IMR-90 (cell line): ENCODE measurements at regions of chr1 and their contacts with region 1.

Region 1: DNA sequence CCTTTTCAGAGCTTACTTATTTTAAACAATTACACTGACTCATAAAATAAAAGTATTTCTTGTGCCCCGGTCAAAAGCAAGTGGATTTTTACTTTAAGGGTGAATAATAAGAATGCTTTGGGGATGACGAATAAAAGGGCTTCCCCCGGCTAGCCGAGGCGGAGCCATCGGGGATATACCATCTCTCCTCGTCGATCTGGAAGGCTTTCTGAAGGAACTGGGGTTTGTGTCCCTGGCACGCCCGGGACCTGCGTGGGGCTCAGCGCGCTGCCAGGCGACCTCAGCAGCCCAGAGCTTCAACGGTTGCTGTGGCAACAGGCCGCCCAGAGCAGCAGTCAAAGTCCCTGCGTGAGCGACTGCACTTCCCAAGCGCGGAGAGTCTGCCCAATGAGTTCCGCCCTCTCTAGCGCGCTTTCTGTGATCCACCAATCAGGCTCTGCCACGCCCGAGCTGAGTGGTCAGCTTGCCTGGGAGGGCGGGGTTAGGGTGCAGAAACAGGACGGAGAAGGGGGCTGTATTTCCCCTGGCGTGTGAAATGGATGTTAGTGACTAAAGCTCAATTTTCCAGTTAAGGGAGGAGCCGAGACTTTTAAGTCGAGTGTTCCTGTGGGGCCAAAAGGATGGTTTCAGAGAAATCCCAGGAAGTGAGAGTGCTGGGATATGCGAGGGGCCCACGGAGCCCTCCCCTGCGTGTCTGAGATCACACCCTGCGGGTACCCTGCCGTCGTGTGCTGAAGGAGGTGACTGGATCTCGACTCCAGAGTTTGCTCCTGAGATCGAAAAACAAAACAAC is 33.0 kb upstream of the MGST3 start:
- DNase-seq: peak; percentile 98
- ATAC-seq: peak; percentile 99
- H3K4me3 ChIP-seq: peak overlapping the region; percentile 60
- H3K27ac ChIP-seq: peak overlapping the region; percentile 35
- H3K4me1 ChIP-seq: peaks cover 2% of the 10 kb centered on the region; the same call in 1 of the 2 replicates
- H3K27me3 ChIP-seq: peaks cover 4% of the 10 kb centered on the region
- CTCF ChIP-seq: no peak
- POLR2A ChIP-seq: peak; percentile 35; the same call in 1 of the 2 replicates
- RAD21 ChIP-seq: no peak

Region 2: GRCh38 chr1:165114022-165114888 is 483.8 kb before region 1 on chr1:
- CTCF ChIA-PET with region 1: no interaction called
- POLR2A ChIA-PET with region 1: no interaction called
- dilution Hi-C with region 1: no loop called
- in situ Hi-C with region 1: no loop called
- intact Hi-C with region 1: loop called (anchors 10 kb)
- DNase-seq: peak; percentile 30
- ATAC-seq: peak; percentile 72
- H3K4me3 ChIP-seq: no peak overlapping the region
- H3K27ac ChIP-seq: no peak overlapping the region
- H3K4me1 ChIP-seq: no peaks in the 10 kb centered on the region
- H3K27me3 ChIP-seq: no peaks in the 10 kb centered on the region; the same call in 1 of the 2 replicates
- CTCF ChIP-seq: peak; percentile 68
- POLR2A ChIP-seq: no peak
- RAD21 ChIP-seq: peak; percentile 61

Region 3: DNA sequence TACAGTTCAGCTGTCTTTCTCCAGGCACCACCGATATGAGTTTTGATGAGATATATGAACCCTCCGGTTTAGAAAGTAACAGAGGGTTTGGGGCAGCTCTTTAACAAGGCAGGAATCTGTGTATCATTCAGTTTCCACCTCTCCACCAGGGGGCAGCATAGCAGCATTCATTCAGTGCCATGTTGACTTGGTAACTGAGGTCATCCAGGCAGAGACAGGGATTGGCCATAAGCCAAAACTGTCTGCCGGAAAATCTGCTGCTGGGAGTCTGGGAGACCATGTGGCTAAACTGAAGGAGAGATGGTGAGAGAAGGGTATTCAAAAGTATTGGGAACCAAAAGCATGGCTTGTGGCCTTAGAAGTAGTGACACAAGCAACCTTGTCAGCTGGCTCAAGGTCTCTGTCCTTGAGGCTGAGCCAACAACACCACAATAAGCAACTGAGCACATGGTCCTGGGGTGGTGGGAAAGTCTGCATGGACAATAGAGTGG is 340.1 kb before region 1 on chr1:
- CTCF ChIA-PET with region 1: no interaction called
- POLR2A ChIA-PET with region 1: no interaction called
- dilution Hi-C with region 1: no loop called
- in situ Hi-C with region 1: no loop called
- intact Hi-C with region 1: loop called (anchors 5 kb)
- DNase-seq: peak; percentile 17
- ATAC-seq: no peak; the same call in 1 of the 2 replicates
- H3K4me3 ChIP-seq: no peak overlapping the region
- H3K27ac ChIP-seq: no peak overlapping the region
- H3K4me1 ChIP-seq: no peaks in the 10 kb centered on the region
- H3K27me3 ChIP-seq: no peaks in the 10 kb centered on the region
- CTCF ChIP-seq: peak; percentile 38
- POLR2A ChIP-seq: no peak
- RAD21 ChIP-seq: 0 out of 2 replicates have a peak, but pooled peaks have one; percentile 20

Region 4: GRCh38 chr1:165403835-165404482 is 194.1 kb before region 1 on chr1:
- CTCF ChIA-PET with region 1: interaction called, 7 read pairs
- POLR2A ChIA-PET with region 1: no interaction called
- dilution Hi-C with region 1: loop called (anchors 25 kb)
- in situ Hi-C with region 1: no loop called
- intact Hi-C with region 1: loop called (anchors 1 kb)
- DNase-seq: no peak
- ATAC-seq: no peak
- H3K4me3 ChIP-seq: no peak overlapping the region
- H3K27ac ChIP-seq: no peak overlapping the region
- H3K4me1 ChIP-seq: no peaks in the 10 kb centered on the region
- H3K27me3 ChIP-seq: no peaks in the 10 kb centered on the region
- CTCF ChIP-seq: peak; percentile 26; the same call in 1 of the 2 replicates
- POLR2A ChIP-seq: no peak
- RAD21 ChIP-seq: no peak; the same call in 1 of the 2 replicates

Region 5: GRCh38 chr1:165431079-165431478 is 167.0 kb before region 1 on chr1:
- CTCF ChIA-PET with region 1: no interaction called
- POLR2A ChIA-PET with region 1: no interaction called
- dilution Hi-C with region 1: no loop called
- in situ Hi-C with region 1: no loop called
- intact Hi-C with region 1: no loop called
- DNase-seq: no peak
- ATAC-seq: no peak
- H3K4me3 ChIP-seq: no peak overlapping the region
- H3K27ac ChIP-seq: no peak overlapping the region
- H3K4me1 ChIP-seq: no peaks in the 10 kb centered on the region
- H3K27me3 ChIP-seq: no peaks in the 10 kb centered on the region
- CTCF ChIP-seq: no peak
- POLR2A ChIP-seq: no peak
- RAD21 ChIP-seq: no peak

Region 6: DNA sequence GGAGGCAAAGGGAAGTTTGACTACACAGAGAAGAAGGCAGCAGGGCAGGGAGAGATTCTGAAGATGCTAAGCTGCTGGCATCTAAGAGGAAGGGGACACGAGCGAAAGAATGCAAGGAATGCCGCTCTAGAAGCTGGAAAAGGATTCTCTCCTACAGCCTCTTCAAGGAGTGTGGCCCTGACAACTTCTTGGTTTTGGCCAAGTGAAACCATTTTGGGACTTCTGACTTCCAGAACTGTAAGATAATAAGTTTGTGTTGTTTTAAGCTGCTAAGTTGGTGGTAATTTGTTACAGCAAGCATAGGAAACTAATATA is 61.5 kb after region 1 on chr1:
- CTCF ChIA-PET with region 1: no interaction called
- POLR2A ChIA-PET with region 1: no interaction called
- dilution Hi-C with region 1: no loop called
- in situ Hi-C with region 1: no loop called
- intact Hi-C with region 1: no loop called
- DNase-seq: no peak
- ATAC-seq: peak; percentile 38
- H3K4me3 ChIP-seq: no peak overlapping the region
- H3K27ac ChIP-seq: no peak overlapping the region
- H3K4me1 ChIP-seq: no peaks in the 10 kb centered on the region
- H3K27me3 ChIP-seq: no peaks in the 10 kb centered on the region
- CTCF ChIP-seq: no peak
- POLR2A ChIP-seq: no peak
- RAD21 ChIP-seq: no peak

Region 7: DNA sequence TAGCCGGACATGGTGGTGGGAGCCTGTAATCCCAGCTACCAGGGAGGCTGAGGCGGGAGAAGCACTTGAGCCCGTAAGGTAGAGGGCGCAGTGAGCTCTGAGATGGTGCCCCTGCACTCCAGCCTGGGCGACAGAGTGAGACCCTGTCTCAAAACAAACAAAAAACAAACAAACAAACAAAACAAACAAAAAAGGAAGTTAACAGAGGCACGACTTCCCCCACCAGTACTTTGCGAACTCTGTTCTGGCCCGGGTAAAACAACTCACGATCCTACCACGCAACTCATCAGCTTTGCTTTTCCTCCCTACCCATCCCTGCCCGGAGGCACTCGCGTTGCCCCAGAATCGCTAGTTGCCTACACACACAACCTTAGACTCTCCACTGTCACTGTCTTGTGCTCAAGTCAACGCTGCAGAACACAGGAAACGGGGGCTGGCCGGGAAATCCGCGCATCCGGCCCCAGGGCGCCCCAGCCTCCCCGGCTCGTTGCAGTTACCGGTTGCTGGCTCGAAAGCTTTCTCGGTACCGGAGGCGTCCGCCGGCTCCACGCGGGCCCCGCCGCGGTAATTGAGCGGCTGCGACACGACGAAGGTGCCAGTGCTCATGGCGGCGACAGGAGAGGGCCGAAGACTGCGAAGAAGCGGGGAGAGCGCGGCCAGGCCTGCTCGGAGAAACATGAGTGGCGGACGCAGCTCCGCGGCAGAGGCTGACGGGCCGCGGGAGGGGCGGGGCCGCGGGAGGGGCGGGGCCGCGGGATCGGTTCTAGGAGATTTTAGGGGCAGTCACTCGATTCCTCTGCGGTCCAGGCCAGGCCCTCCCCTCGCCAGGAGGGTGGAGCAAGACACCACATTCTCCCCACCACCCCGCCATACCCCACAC is 100.0 kb after region 1 on chr1 and contains the start of gene ALDH9A1:
- CTCF ChIA-PET with region 1: interaction called, 3 read pairs
- POLR2A ChIA-PET with region 1: no interaction called
- dilution Hi-C with region 1: no loop called
- in situ Hi-C with region 1: no loop called
- intact Hi-C with region 1: loop called (anchors 1 kb)
- DNase-seq: peak; percentile 76
- ATAC-seq: peak; percentile 96
- H3K4me3 ChIP-seq: peak within 1 kb of the TSS; percentile 70
- H3K27ac ChIP-seq: peak within 1 kb of the TSS; percentile 94
- H3K4me1 ChIP-seq: no peaks in the 10 kb centered on the region
- H3K27me3 ChIP-seq: no peaks in the 10 kb centered on the region
- CTCF ChIP-seq: peak; percentile 23; the same call in 1 of the 2 replicates
- POLR2A ChIP-seq: peak; percentile 61; the same call in 1 of the 2 replicates
- RAD21 ChIP-seq: no peak
- total RNA-seq, gene ALDH9A1: 43.7 and 101 TPM in 2 replicates

Region 8: GRCh38 chr1:165747632-165748447 is 149.8 kb after region 1 on chr1:
- CTCF ChIA-PET with region 1: no interaction called
- POLR2A ChIA-PET with region 1: no interaction called
- dilution Hi-C with region 1: no loop called
- in situ Hi-C with region 1: no loop called
- intact Hi-C with region 1: no loop called
- DNase-seq: no peak
- ATAC-seq: no peak
- H3K4me3 ChIP-seq: no peak overlapping the region
- H3K27ac ChIP-seq: no peak overlapping the region
- H3K4me1 ChIP-seq: no peaks in the 10 kb centered on the region
- H3K27me3 ChIP-seq: no peaks in the 10 kb centered on the region
- CTCF ChIP-seq: no peak
- POLR2A ChIP-seq: no peak
- RAD21 ChIP-seq: no peak

Region 9: GRCh38 chr1:165827268-165828102 is 229.4 kb after region 1 on chr1 and contains the start of gene UCK2:
- CTCF ChIA-PET with region 1: no interaction called
- POLR2A ChIA-PET with region 1: no interaction called
- dilution Hi-C with region 1: no loop called
- in situ Hi-C with region 1: no loop called
- intact Hi-C with region 1: loop called (anchors 5 kb)
- DNase-seq: peak; percentile 76
- ATAC-seq: peak; percentile 88
- H3K4me3 ChIP-seq: peak within 1 kb of the TSS; percentile 93
- H3K27ac ChIP-seq: peak within 1 kb of the TSS; percentile 85
- H3K4me1 ChIP-seq: no peaks in the 10 kb centered on the region
- H3K27me3 ChIP-seq: no peaks in the 10 kb centered on the region
- CTCF ChIP-seq: peak; percentile 29
- POLR2A ChIP-seq: peak; percentile 91
- RAD21 ChIP-seq: no peak
- total RNA-seq, gene UCK2: 74.2 and 87.8 TPM in 2 replicates

Region 10: GRCh38 chr1:166479052-166479631 is 881.1 kb after region 1 on chr1:
- CTCF ChIA-PET with region 1: interaction called, 3 read pairs
- POLR2A ChIA-PET with region 1: no interaction called
- dilution Hi-C with region 1: no loop called
- in situ Hi-C with region 1: loop called (anchors 25 kb)
- intact Hi-C with region 1: loop called (anchors 1 kb)
- DNase-seq: peak; percentile 18
- ATAC-seq: peak; percentile 44; the same call in 1 of the 2 replicates
- H3K4me3 ChIP-seq: no peak overlapping the region
- H3K27ac ChIP-seq: no peak overlapping the region
- H3K4me1 ChIP-seq: no peaks in the 10 kb centered on the region
- H3K27me3 ChIP-seq: no peaks in the 10 kb centered on the region
- CTCF ChIP-seq: peak; percentile 62
- POLR2A ChIP-seq: no peak
- RAD21 ChIP-seq: peak; percentile 55